K562 (cell line): ENCODE measurements at regions of chr3 and their contacts with region 1.

Region 1: GRCh38 chr3:47380601-47381316 is at the start of gene PTPN23:
- DNase-seq: peak; percentile 97 to 100 (median 98)
- ATAC-seq: peak; percentile 87
- H3K4me3 ChIP-seq: peak within 1 kb of the TSS; percentile 88
- H3K27ac ChIP-seq: peak within 1 kb of the TSS; percentile 94
- H3K4me1 ChIP-seq: peaks cover 30 to 32% of the 10 kb centered on the region in 2 experiments
- H3K27me3 ChIP-seq: no peaks in the 10 kb centered on the region
- CTCF ChIP-seq: no peak
- EP300 ChIP-seq: no peak
- POLR2A ChIP-seq: peak; percentile 92
- RAD21 ChIP-seq: no peak
- polyA plus RNA-seq, gene PTPN23: 0.41 to 0.93 TPM

Region 2: DNA sequence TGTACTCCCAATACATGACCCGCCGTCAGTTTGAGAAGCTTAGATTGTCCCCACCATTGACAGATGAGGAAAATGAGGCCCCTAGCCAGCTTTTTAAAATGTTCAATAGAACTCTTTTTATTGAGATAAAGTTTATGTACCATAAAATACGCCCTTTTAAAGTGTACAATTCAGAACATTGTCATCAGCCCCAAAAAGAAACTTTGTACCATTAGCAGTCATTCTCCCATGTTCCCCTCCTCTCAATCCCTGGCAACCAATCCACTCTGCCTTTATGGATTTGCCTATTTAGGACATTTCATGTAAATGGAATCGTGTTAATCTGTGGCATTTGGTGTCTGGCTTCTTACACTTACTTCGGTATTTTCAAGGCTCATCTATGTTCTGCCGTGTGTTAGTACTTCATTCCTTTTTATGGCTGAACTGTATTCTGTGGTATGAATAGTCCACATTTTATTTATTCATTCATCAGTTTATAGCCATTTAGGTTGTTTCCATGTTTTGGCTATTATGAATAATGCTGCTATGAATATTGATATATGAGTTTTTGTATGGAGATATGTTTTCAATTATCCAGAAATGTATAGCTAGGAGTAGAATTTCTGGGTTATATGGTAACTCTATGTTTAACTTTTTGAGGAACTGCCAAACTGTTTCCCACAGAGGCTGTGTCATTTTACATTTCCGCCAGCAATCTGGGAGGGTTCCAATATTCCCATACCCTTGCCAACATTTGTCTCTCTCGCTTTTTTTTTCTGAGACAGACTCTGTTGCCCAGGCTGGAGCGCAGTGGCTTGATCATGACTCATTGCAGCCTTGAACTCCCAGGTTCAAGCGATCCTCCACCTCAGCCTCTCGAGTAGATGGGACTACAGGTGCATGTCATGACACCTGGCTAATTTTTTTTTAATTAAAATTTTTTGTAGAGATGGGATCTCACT is 15.3 kb before region 1 on chr3:
- CTCF ChIA-PET with region 1: no interaction called
- POLR2A ChIA-PET with region 1: interaction called, 13 read pairs
- in situ Hi-C with region 1: no loop called
- intact Hi-C with region 1: no loop called
- DNase-seq: no peak
- ATAC-seq: no peak
- H3K4me3 ChIP-seq: no peak overlapping the region
- H3K27ac ChIP-seq: no peak overlapping the region
- H3K4me1 ChIP-seq: no peaks in the 10 kb centered on the region
- H3K27me3 ChIP-seq: no peaks in the 10 kb centered on the region
- CTCF ChIP-seq: no peak
- EP300 ChIP-seq: no peak
- POLR2A ChIP-seq: no peak
- RAD21 ChIP-seq: no peak